ENCODE measurements at regions of chr7 and their contacts with region 1.

Region 1: DNA sequence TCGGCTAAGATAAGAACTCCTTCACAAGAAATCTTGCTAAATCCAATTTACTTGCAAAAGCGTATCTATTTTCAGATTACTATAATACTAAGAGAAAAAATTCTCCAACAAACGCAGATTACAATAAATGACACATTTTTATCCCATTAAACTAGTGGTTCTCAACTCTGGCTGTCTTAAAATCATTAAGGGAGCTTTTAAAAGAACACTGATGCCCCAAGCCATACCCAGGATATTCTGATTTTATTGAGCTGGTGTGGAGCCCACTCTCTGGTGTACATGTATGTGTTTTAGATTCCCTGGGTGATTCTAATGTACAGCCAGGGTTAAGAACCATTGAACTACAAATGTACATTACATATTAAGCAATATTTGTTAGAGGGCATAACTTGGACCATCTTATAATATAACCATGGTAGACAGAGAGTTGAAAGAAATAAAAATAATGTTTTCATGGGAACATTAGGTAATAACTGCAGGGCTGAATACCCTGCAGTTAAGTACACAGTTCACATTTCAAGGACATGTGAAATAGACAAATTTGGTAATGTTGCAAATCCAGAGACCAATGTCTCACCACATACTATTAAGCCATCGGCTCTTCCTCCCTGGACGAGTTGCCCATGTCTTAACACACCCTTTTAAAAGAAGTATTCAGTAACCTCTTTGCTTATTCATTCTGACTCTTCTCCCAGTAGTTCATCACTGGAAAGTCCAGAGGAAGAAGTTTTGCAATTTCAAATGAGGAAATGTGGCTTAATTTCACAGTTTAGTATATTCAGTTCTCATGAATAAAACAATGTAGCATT is 6.2 kb downstream of the GSAP start:
- DNase-seq: no peak
- ATAC-seq: peak; percentile 70

Region 2: DNA sequence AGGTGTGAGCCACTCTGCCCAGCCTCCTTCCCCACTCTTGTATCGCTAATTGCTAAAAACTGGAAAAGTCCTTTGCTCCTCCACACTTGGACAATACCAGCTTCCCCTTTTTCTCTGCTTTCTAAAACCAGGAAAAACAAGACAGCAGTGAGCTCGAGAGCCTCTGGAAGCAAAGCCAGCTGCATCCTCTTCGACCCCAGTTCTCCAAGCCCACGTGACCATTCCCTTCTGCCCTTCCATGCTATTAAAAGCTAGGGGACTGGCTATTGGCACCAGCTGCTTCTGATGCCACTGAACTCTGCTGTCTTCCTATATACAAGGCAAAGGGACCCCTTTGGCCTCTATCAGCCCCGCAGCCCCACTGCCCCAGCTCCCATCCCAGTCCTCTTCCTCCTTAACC is 1825.6 kb before region 1 on chr7:
- intact Hi-C with region 1: loop called (anchors 5 kb)
- DNase-seq: no peak
- ATAC-seq: peak; percentile 18

Region 3: DNA sequence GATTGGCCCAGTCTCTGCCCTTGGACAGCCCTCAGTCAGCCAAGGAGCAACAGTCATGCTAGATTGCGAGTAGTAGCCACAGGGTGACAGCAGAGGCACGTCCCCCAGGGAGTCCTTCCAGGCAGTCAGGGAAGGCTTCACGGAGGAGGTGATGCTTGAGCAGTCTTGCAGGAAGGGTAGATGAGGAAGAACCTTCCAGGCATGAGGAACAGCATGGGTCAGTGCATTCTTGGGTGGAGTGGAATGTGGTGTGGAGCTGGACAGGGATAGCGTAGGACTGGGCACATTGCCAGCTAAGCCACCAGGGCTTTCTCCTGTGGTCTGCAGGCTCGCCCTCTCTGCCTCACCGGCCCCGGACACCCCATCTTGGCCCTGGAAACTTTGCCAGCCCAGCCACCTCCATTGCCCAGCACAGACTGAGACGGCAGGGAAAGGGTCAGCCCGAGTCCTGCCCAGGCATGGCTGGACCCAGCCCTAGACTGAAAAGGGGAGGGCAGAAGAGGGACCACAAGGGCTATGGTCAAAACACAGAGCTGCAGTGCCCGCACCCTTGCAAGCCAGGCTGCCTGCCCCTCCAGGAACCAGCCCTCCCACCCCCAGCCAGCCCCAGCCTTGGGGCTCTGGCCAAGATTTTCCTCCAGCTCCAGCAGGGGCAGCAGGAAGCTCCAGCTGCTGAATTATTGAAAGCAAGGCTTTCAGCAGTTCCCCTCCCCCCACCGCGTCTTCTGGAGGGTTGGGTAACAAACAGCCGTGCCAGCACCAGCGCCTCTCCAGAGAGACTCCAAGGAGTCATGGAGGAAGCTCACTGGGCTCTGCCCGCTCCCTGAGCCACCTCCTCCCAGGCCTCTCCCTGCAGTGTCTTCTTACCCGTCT is 1189.5 kb before region 1 on chr7:
- intact Hi-C with region 1: no loop called
- DNase-seq: peak; percentile 62
- ATAC-seq: peak; percentile 62

Region 4: DNA sequence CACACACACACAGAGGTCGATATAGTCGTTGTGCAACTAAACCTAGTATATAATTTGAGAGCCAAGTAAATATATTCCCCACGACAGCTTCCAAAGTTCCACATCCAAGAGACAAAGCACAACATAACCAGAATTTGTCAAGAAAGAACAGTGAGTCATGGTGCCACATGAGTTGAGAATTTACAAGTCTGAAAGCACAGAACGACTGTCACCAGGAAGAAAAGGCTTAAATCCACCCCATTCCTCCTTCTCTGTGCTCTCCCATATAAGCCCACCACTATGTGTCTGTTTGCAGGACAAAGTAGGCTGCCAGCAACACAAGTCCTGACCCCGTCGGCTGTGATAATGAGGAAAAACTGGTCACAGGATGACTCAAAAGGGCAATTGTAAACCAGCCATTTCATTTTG is 26.6 kb before region 1 on chr7:
- intact Hi-C with region 1: no loop called
- DNase-seq: no peak
- ATAC-seq: no peak